ENCODE measurements at regions of chr11 and their contacts with region 1.

Region 1: DNA sequence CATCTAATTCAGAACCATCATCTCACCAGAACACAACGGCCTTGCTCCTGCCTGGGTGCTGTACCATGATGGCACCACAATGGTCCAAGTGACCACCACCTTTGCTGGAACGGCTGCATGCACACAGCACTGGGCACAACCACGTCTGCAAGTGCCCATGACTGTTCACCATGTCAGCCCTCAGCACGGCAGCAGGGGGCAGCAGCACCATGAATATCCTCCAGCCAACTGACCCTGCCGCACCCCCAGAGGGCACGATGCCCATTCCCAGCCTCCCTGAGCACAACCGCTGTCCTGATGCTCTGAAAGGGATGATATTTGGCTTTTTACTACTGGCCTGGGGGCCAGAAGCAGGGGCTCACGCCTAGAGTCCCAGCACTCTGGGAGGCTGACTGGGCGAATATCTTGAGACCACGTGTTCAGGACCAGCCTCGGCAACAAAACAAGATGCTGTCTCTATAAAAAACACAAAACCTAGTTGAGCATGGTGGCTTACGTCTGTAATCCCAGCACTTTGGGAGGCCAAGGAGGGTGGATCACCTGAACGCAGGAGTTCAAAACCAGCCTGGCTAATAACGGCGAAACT is 25.7 kb downstream of the DRD4 start:
- DNase-seq: peak; percentile 39
- ATAC-seq: peak; percentile 84
- H3K4me3 ChIP-seq: no peak overlapping the region
- H3K27ac ChIP-seq: no peak overlapping the region
- H3K4me1 ChIP-seq: peaks cover 10% of the 10 kb centered on the region
- H3K27me3 ChIP-seq: no peaks in the 10 kb centered on the region
- CTCF ChIP-seq: peak; percentile 91
- EP300 ChIP-seq: no peak
- POLR2A ChIP-seq: no peak
- RAD21 ChIP-seq: peak; percentile 80

Region 2: DNA sequence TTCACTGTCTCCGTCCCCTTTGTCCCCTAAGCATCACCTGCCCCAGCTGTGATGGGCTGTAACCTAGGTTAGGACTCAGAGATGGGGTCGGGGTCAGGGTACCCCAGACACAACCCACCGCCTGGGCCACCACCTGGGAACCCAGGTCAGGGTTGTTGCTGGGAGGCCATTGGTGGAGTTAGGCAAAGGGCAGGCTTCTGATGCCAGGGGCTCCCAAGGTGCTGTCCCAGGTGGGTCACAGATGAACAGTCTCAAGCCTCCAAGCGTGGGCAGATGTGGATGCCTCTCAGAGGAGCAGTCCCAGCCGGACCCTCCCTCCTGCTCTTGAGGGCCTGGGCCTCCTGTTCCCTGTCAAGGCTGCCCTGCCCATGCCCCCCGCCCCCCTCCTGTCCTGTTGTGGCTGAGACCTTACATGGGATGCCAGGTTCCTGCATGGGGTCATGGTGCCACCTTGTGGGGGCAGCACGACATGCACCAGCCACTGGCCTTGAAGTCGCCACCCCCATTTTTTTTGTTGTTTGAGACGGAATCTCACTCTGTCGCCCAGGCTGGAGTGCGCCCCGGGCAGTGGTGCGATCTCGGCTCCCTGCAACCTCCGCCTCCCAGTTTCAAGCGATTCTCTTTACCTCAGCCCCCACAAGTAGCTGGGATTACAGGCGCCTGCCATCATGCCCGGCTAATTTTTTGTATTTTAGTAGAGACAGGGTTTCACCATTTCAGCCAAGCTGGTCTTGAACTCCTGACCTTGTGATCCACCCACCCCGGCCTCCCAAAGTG is 102.4 kb after region 1 on chr11:
- CTCF ChIA-PET with region 1: no interaction called
- POLR2A ChIA-PET with region 1: no interaction called
- in situ Hi-C with region 1: loop called (anchors 5 kb)
- intact Hi-C with region 1: loop called (anchors 2 kb)
- DNase-seq: peak; percentile 35
- ATAC-seq: peak; percentile 51
- H3K4me3 ChIP-seq: no peak overlapping the region
- H3K27ac ChIP-seq: no peak overlapping the region
- H3K4me1 ChIP-seq: peaks cover 7% of the 10 kb centered on the region
- H3K27me3 ChIP-seq: no peaks in the 10 kb centered on the region
- CTCF ChIP-seq: peak; percentile 86
- EP300 ChIP-seq: no peak
- POLR2A ChIP-seq: no peak; a peak in 1 of 4 replicates
- RAD21 ChIP-seq: peak; percentile 73